Activated CD8-positive, alpha-beta T cell treated with anti-CD3 and anti-CD28 coated beads, Interleukin-2, amount 10 ng/mL, durations not matched to agents 7 days and 5 days (primary cell): ENCODE measurements at regions of chr3 and their contacts with region 1.

Region 1: DNA sequence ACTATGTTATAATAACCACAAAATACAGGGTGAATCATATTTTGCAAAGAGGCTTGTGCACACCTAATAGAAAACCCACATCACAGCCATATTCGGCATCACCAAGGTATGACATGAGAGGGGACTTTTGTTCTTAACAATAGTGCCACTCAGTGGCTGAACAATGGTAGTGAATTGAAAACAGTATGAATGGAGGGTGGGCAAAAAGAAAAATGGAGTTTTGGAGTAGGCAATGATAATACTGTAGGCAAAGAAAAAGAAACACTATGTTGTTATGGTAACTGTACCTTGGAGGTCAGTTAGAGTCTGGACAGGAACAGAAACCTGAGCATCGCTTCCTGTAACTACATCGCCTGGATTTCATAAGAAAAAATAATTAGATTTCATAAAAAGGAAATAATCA is 348.6 kb downstream of the PLCL2 start:
- DNase-seq: peak; percentile 61
- ATAC-seq: peak; percentile 93
- H3K4me3 Mint-ChIP-seq: no peak overlapping the region
- H3K27ac Mint-ChIP-seq: peak overlapping the region; percentile 47
- H3K4me1 Mint-ChIP-seq: peaks cover 35% of the 10 kb centered on the region
- H3K27me3 Mint-ChIP-seq: no peaks in the 10 kb centered on the region

Region 2: GRCh38 chr3:16600780-16601539 is 632.4 kb before region 1 on chr3:
- CTCF ChIA-PET with region 1: interaction called, 28 read pairs
- POLR2A ChIA-PET with region 1: interaction called, 4 read pairs
- DNase-seq: peak; percentile 87
- ATAC-seq: peak; percentile 55
- H3K4me3 Mint-ChIP-seq: no peak overlapping the region
- H3K27ac Mint-ChIP-seq: no peak overlapping the region
- H3K4me1 Mint-ChIP-seq: peaks cover 29% of the 10 kb centered on the region
- H3K27me3 Mint-ChIP-seq: peaks cover 22% of the 10 kb centered on the region

Region 3: GRCh38 chr3:16828815-16829214 is 404.6 kb before region 1 on chr3:
- CTCF ChIA-PET with region 1: interaction called, 28 read pairs
- POLR2A ChIA-PET with region 1: no interaction called
- DNase-seq: peak; percentile 64
- ATAC-seq: peak; percentile 50
- H3K4me3 Mint-ChIP-seq: no peak overlapping the region
- H3K27ac Mint-ChIP-seq: no peak overlapping the region
- H3K4me1 Mint-ChIP-seq: peaks cover 12% of the 10 kb centered on the region
- H3K27me3 Mint-ChIP-seq: no peaks in the 10 kb centered on the region

Region 4: DNA sequence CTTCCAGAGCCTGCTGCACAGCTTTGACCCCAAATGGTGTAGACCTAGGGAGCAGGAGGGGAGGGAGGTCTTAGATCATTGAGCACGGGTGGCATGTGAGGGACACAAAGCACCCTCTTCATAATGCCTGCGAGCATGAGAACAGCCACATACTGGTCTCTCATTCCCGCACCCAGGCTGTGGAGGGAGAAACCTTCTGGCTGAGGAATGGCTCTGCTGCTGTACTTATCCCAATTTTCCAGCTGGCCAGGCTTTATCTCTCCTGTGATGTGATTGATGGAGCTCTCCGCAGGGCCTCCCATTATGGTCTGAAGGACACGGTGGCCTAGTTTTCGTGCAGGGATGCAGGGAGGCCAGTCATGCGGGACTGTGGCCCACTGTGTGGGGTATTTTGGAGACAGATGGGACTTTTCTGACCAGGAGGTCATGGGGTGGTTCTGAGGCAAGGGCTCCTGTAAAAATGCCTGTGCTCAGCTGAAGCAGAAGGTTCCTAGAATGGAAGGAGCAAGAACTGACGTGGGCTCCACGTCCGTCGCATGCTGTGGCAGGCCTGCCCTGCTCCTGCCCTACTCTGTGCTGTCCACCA is 97.2 kb before region 1 on chr3:
- CTCF ChIA-PET with region 1: no interaction called
- POLR2A ChIA-PET with region 1: no interaction called
- DNase-seq: no peak
- ATAC-seq: no peak
- H3K4me3 Mint-ChIP-seq: no peak overlapping the region
- H3K27ac Mint-ChIP-seq: no peak overlapping the region
- H3K4me1 Mint-ChIP-seq: peaks cover 11% of the 10 kb centered on the region
- H3K27me3 Mint-ChIP-seq: no peaks in the 10 kb centered on the region

Region 5: DNA sequence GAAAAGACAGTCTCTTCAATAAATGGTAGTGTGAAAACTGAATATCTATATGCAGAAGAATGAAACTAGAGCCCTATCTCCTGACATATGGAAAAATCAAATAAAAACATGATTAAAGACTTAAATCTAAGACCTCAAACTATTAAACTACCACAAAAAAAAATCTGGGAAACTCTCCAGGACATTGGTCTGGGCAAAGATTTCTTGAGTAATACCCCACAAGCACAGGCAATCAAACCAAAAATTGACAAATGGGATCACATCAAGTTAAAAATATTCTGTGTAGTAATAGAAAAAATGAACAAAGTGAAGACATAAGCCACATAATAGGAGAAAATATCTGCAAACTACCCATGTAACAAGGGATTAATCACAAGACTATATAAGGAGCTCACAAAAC is 222.6 kb after region 1 on chr3:
- CTCF ChIA-PET with region 1: no interaction called
- POLR2A ChIA-PET with region 1: no interaction called
- DNase-seq: no peak
- ATAC-seq: no peak
- H3K4me3 Mint-ChIP-seq: no peak overlapping the region
- H3K27ac Mint-ChIP-seq: no peak overlapping the region
- H3K4me1 Mint-ChIP-seq: no peaks in the 10 kb centered on the region
- H3K27me3 Mint-ChIP-seq: no peaks in the 10 kb centered on the region